A549 (cell line): ENCODE measurements at regions of chr11 and their contacts with region 1.

Region 1: GRCh38 chr11:74255741-74256369 is 55.6 kb downstream of the P4HA3 start:
- DNase-seq: peak; percentile 73 to 74
- ATAC-seq: peak; percentile 60 to 66; a peak in 4 of 6 replicates
- H3K4me3 ChIP-seq: no peak overlapping the region
- H3K27ac ChIP-seq: peak overlapping the region; percentile 69 to 83
- H3K4me1 ChIP-seq: peaks cover 53% of the 10 kb centered on the region
- CTCF ChIP-seq: peak; percentile 96
- EP300 ChIP-seq: no peak
- POLR2A ChIP-seq: no peak
- RAD21 ChIP-seq: peak; percentile 97

Region 2: DNA sequence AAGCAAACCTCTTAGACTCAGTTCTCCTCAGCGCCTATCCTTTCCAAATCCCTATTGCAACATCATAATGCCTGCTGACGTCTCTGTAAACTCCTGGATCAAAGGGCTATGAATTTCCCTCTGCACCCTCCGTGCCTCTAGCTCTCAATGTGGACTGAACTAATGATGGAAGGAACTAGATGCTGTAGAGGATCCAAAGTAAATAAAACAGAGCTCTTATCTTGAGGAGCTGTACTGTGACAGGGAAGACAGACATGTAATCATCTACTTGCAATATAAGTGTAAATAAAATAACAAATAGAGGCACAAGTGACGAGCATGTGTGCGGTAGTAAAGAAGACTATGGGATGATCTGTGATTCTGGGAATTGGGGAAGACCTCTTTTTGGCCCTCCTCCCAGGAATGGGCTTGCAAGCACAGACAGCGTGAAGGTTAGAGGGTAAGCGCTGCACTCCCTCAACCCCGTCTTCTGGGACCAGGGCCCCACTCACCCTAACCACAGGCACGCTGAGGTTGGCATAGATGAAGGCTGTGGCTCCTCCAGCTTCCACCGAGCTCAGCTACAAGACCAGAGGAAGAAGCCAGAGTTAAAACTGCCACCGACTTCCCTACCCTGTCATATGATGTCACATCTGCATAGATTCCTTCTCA is 13.4 kb after region 1 on chr11:
- CTCF ChIA-PET with region 1: interaction called, 32 read pairs
- POLR2A ChIA-PET with region 1: no interaction called
- DNase-seq: peak in 1 of 2 experiments; percentile 78
- ATAC-seq: peak; percentile 72 to 88
- H3K4me3 ChIP-seq: no peak overlapping the region
- H3K27ac ChIP-seq: peak overlapping the region; percentile 81 to 88
- H3K4me1 ChIP-seq: peaks cover 75% of the 10 kb centered on the region
- CTCF ChIP-seq: no peak
- EP300 ChIP-seq: peak; percentile 95 to 96
- POLR2A ChIP-seq: no peak
- RAD21 ChIP-seq: peak in 1 of 2 experiments; percentile 40; a peak in 3 of 5 replicates

Region 3: DNA sequence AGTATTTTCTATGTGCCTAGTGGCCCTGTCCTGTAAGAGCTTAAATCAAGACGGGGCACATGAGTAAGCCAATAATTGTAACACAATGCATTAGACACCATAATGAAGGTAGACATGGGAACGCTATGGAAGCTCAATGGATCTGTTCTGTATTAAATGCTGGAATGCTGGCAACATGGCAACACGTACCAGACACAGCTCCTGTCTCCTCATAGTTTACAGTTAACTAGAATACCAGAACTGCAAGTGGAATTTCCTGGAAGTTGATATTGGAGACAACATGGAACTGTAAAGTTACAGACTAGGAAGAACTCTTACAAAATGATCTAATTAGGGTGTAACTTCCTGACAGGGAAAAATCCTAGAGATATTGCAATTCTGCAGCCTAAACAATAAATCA is 43.2 kb after region 1 on chr11:
- CTCF ChIA-PET with region 1: interaction called, 13 read pairs
- POLR2A ChIA-PET with region 1: no interaction called
- DNase-seq: no peak
- ATAC-seq: no peak
- H3K4me3 ChIP-seq: no peak overlapping the region
- H3K27ac ChIP-seq: no peak overlapping the region
- H3K4me1 ChIP-seq: peaks cover 7% of the 10 kb centered on the region; the same call in 1 of the 3 replicates
- CTCF ChIP-seq: no peak
- EP300 ChIP-seq: no peak
- POLR2A ChIP-seq: no peak
- RAD21 ChIP-seq: no peak

Region 4: DNA sequence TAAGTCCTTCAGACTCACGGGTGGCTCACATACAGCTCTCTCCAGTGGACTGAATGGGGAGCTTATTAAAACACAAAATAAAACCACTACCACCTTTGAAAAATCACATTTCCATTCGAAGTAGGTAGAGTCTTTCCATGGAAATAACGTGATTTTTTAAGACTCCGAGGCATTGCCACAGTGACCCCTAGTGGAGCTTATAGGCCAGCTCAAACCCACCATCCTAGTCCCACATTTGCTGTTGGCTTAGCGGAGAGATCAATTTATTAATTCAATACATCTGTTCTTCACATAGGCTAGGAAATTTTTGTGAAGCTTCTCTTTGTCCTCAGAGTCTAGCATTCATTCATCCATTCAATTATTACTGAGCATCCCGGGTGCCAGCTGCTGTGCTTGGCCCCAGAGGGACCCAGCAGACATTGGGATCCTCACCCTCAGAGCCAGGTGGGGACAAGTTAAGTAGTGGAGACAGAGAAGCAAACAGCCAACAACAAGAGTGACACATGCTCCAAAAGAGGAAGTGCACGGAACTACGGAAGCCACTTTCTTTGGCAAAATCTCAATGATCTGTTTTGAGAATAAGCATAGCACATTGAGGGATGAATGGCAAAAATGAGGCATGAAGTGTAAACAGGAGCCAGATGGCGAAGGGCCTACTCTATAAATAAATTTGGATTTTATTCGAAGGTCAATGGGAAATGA is 65.8 kb after region 1 on chr11:
- CTCF ChIA-PET with region 1: interaction called, 31 read pairs
- POLR2A ChIA-PET with region 1: no interaction called
- DNase-seq: peak in 1 of 2 experiments; percentile 64
- ATAC-seq: peak in 1 of 2 experiments; percentile 61; a peak in 3 of 6 replicates
- H3K4me3 ChIP-seq: no peak overlapping the region
- H3K27ac ChIP-seq: peak overlapping the region; percentile 81 to 89
- H3K4me1 ChIP-seq: peaks cover 26% of the 10 kb centered on the region
- CTCF ChIP-seq: peak; percentile 68
- EP300 ChIP-seq: no peak
- POLR2A ChIP-seq: no peak
- RAD21 ChIP-seq: peak; percentile 73 to 85

Region 5: DNA sequence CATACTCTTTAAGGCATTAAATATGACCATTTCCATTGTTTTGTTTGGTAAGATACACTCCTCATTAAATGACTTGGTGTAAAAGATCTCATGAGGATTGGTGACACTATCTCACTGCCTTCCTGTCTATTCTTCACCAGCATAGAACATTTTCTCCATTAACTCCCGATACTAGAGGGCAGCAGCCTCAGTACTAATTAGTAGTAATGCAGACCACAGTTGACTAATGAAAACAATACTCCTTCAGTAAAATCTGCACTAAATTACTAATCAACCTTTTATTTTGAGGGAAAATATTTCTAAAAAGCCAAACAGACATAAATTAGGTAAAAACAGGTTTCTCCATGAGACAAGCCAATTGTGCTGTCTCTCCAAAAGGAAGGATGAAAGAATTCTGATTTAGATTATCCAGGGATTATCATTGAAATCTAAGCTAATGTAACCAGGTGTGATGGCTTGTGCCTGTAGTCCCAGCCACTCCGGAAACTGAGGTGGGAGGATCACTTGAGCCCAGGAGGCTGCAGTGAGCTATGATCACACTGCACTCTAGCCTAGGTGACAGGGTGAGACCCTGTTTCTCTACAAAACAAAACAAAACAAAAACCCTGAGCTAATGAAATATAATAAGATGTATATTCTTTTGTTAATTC is 132.9 kb after region 1 on chr11:
- CTCF ChIA-PET with region 1: interaction called, 14 read pairs
- POLR2A ChIA-PET with region 1: no interaction called
- DNase-seq: peak; percentile 21 to 45
- ATAC-seq: peak; percentile 82 to 87; a peak in 5 of 6 replicates
- H3K4me3 ChIP-seq: no peak overlapping the region
- H3K27ac ChIP-seq: peak overlapping the region; percentile 21 to 67; a peak in 3 of 6 replicates
- H3K4me1 ChIP-seq: peaks cover 49% of the 10 kb centered on the region
- CTCF ChIP-seq: peak; percentile 93
- EP300 ChIP-seq: no peak
- POLR2A ChIP-seq: no peak
- RAD21 ChIP-seq: peak; percentile 70 to 73